ENCODE measurements at regions of chr12 and their contacts with region 1.

Region 1: GRCh38 chr12:68587448-68587873 is 23.2 kb upstream of the RAP1B start:
- DNase-seq: peak; percentile 65
- ATAC-seq: peak; percentile 94
- H3K4me3 ChIP-seq: no peak overlapping the region
- H3K27ac ChIP-seq: no peak overlapping the region
- H3K4me1 ChIP-seq: peaks cover 8% of the 10 kb centered on the region; the same call in 1 of the 2 replicates
- H3K27me3 ChIP-seq: no peaks in the 10 kb centered on the region
- CTCF ChIP-seq: no peak
- EP300 ChIP-seq: peak in 1 of 2 experiments; percentile 53; a peak in 1 of 4 replicates
- POLR2A ChIP-seq: no peak
- RAD21 ChIP-seq: no peak

Region 2: GRCh38 chr12:68462803-68463202 is 124.7 kb before region 1 on chr12:
- CTCF ChIA-PET with region 1: no interaction called
- POLR2A ChIA-PET with region 1: no interaction called
- RAD21 ChIA-PET with region 1: no interaction called
- SMC1A ChIA-PET with region 1: no interaction called
- in situ Hi-C with region 1: no loop called
- intact Hi-C with region 1: no loop called
- DNase-seq: no peak
- ATAC-seq: peak; percentile 88
- H3K4me3 ChIP-seq: peak overlapping the region; percentile 9; the same call in 1 of the 2 replicates
- H3K27ac ChIP-seq: peak overlapping the region; percentile 13; the same call in 1 of the 2 replicates
- H3K4me1 ChIP-seq: no peaks in the 10 kb centered on the region
- H3K27me3 ChIP-seq: no peaks in the 10 kb centered on the region
- CTCF ChIP-seq: no peak
- EP300 ChIP-seq: no peak
- POLR2A ChIP-seq: no peak
- RAD21 ChIP-seq: no peak

Region 3: DNA sequence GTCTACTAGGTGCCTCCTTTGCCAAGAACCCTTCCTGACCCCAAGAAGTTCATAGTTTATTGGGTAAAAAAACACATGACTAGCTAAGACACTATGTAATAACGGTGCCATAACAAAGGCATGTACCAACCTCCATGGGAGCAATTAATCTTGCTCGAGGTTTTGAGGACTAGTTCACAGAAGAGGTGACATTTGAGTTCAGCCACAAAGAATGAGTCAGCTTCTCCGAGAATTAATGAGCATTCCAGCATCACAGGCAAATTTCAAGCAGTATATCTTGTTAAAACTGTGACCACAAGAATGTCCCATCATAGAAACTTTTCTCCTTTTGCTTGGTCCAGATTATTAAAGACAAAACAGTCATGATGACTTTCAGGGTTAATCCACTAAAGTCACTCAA is 89.8 kb before region 1 on chr12:
- CTCF ChIA-PET with region 1: no interaction called
- POLR2A ChIA-PET with region 1: no interaction called
- RAD21 ChIA-PET with region 1: interaction called, 4 read pairs
- SMC1A ChIA-PET with region 1: interaction called, 9 read pairs
- in situ Hi-C with region 1: no loop called
- intact Hi-C with region 1: loop called (anchors 5 kb)
- DNase-seq: peak; percentile 50
- ATAC-seq: peak; percentile 82
- H3K4me3 ChIP-seq: no peak overlapping the region
- H3K27ac ChIP-seq: no peak overlapping the region
- H3K4me1 ChIP-seq: peaks cover 27% of the 10 kb centered on the region
- H3K27me3 ChIP-seq: no peaks in the 10 kb centered on the region
- CTCF ChIP-seq: no peak
- EP300 ChIP-seq: no peak
- POLR2A ChIP-seq: no peak
- RAD21 ChIP-seq: no peak

Region 4: GRCh38 chr12:68572661-68573060 is 14.8 kb before region 1 on chr12:
- CTCF ChIA-PET with region 1: interaction called, 4 read pairs
- POLR2A ChIA-PET with region 1: no interaction called
- RAD21 ChIA-PET with region 1: interaction called, 4 read pairs
- SMC1A ChIA-PET with region 1: interaction called, 10 read pairs
- in situ Hi-C with region 1: no loop called
- intact Hi-C with region 1: no loop called
- DNase-seq: no peak
- ATAC-seq: no peak
- H3K4me3 ChIP-seq: no peak overlapping the region
- H3K27ac ChIP-seq: no peak overlapping the region
- H3K4me1 ChIP-seq: no peaks in the 10 kb centered on the region
- H3K27me3 ChIP-seq: no peaks in the 10 kb centered on the region
- CTCF ChIP-seq: no peak
- EP300 ChIP-seq: no peak
- POLR2A ChIP-seq: no peak
- RAD21 ChIP-seq: no peak

Region 5: DNA sequence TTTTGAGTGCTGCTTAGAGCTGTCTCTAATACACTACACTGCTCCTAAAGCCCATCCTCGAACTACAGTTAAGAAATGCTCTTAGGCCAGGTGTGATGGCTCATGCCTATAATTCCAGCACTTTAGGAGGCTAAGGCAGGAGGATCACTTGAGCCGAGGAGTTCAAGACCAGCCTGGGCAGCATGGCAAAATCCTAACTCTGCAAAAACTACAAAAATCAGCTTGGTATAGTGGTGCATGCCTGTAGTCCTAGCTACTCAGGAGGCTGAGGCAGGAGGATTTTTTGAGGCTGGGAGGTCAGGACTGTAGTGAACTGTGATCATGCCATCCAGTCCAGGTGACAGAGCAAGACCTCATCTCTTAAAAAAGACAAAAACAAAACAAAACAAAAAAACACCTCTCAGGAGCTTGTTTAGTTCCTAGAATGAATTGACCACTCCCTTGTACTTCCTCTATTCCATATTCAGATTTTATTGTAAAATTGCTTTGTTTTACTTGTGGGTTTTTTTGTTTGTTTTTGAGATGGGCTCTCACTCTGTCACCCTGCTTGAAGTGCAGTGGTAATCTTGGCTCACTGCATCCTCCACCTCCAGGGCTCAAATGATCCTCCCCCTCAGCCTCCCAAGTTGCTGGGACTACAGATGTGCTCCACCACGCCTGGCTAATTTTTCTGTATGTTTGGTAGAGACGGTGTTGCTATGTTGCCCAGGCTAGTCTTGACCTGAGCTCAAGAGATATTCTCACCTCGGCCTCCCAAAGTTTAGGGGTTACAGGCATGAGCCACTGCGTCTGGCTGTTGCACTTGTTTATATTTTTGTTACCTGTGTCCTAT is 234.1 kb after region 1 on chr12:
- CTCF ChIA-PET with region 1: no interaction called
- POLR2A ChIA-PET with region 1: no interaction called
- RAD21 ChIA-PET with region 1: no interaction called
- SMC1A ChIA-PET with region 1: no interaction called
- in situ Hi-C with region 1: no loop called
- intact Hi-C with region 1: no loop called
- DNase-seq: no peak
- ATAC-seq: peak; percentile 58
- H3K4me3 ChIP-seq: no peak overlapping the region
- H3K27ac ChIP-seq: no peak overlapping the region
- H3K4me1 ChIP-seq: no peaks in the 10 kb centered on the region
- H3K27me3 ChIP-seq: no peaks in the 10 kb centered on the region
- CTCF ChIP-seq: no peak
- EP300 ChIP-seq: no peak
- POLR2A ChIP-seq: 0 out of 2 replicates have a peak, but pooled peaks have one; percentile 33
- RAD21 ChIP-seq: no peak